ENCODE measurements at regions of chr10 and their contacts with region 1.

Region 1: DNA sequence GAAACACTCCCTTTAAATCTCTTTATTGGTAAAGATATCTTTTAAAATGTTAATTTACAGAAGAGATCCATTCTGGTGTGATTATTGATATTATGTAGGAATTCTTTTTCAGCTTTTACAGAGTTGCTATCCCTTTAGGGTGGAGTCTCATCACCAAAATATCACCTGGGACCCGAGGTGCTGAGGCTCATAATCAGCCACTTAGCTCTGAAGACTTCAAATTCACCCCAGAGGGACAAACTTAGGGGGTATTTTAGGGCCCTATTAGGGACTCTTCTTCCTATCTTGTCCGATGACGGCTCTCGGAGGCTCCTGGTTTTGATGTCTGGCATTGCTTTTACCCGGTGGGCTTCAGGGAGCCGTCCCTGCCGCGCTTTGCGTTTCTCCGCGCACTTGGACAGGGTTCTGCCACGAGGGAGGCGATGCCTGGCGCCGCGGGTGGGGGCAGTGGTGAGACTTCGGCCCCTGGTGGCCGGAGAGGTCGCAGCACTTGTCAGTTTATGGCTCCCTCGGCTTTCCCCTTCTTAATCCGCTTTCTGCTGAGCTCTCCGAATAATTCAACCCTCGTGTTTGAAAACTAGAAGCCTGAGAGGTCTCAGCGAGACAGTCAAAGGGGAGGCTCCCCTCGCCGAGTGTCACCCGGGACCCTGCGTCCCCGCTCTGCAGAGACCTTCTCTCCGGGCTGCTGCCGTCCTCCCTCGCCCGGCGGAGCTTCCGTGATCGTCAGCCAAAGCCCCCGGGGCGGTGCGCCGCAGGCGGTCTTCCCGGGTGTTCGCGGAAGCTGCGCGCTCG is 27.8 kb downstream of the RBM20 start:
- DNase-seq: peak; percentile 69 to 77
- H3K4me3 ChIP-seq: peak overlapping the region; percentile 21 to 51 (median 41)
- H3K27ac ChIP-seq: peak overlapping the region in 2 of 3 donors; percentile 55 to 57
- H3K4me1 ChIP-seq: peaks cover 0 to 3% of the 10 kb centered on the region in 2 donors
- H3K27me3 ChIP-seq: no peaks in the 10 kb centered on the region
- CTCF ChIP-seq: peak; percentile 76 to 93 (median 84)
- POLR2A ChIP-seq: no peak

Region 2: GRCh38 chr10:110610308-110610774 is 61.6 kb before region 1 on chr10:
- intact Hi-C with region 1: loop called (anchors 5 kb)
- DNase-seq: peak; percentile 30 to 56
- H3K4me3 ChIP-seq: no peak overlapping the region
- H3K27ac ChIP-seq: no peak overlapping the region
- H3K4me1 ChIP-seq: no peaks in the 10 kb centered on the region
- H3K27me3 ChIP-seq: no peaks in the 10 kb centered on the region
- CTCF ChIP-seq: peak; percentile 63 to 93 (median 83)
- POLR2A ChIP-seq: no peak